Heart left ventricle (tissue), 16 donors: ENCODE measurements at regions of chr20 and their contacts with region 1.

Region 1: DNA sequence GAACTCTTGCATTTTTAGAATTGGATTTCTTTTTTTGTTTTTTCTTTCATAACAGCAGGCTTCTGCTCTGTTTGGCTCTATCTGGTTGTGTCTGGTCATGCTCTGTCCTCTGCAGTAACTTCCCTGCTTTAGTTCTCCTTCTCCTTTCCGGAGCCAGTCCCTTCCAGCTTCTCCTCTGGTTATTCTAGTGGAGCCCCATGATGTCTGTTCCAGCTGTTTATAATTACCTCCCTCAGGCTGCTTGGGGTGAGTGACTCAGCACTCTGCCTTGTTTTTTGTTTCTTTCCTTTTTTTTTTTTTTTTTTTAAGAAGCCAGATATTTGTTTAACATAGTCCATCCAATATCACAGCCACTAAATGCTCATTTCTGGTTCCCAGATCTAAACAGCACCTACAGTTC is 409.6 kb downstream of the MAFB start:
- DNase-seq: peak in 4 of 5 donors; percentile 39 to 60 (median 44)
- ATAC-seq: peak; percentile 88 to 95 (median 92)
- H3K4me3 ChIP-seq: no peak overlapping the region
- H3K27ac ChIP-seq: peak overlapping the region in 10 of 12 donors; percentile 8 to 91 (median 40)
- H3K4me1 ChIP-seq: peaks cover 0 to 37% (median 5%) of the 10 kb centered on the region in 12 donors
- H3K27me3 ChIP-seq: no peaks in the 10 kb centered on the region
- CTCF ChIP-seq: no peak
- POLR2A ChIP-seq: no peak

Region 2: DNA sequence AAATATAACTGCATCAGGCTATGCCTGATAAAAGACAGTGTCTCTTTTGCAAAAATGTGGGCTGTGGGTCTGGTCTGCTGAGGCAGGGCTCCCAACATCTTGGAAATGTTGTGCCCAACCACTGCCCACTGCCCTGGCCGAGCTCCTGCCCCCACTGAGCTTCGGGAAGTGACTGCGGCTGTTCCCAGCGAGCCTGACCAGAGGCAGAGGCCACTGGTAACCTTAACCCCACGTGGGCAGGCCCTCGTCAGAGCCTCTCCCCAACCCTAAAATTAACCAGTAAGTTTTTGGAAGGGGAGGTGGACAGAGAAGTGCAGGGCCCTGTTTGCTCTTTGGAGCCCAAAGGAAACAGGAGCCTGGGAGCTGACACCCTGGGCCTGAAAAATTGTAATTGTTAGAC is 183.8 kb after region 1 on chr20:
- intact Hi-C with region 1: loop called in 1 of 10 experiments (anchors 10 kb)
- DNase-seq: peak in 1 of 5 donors; percentile 34
- ATAC-seq: peak in 2 of 4 donors; percentile 46 to 49
- H3K4me3 ChIP-seq: no peak overlapping the region
- H3K27ac ChIP-seq: peak overlapping the region in 1 of 12 donors; percentile 84
- H3K4me1 ChIP-seq: peaks cover 0 to 40% (median 0%) of the 10 kb centered on the region in 12 donors
- H3K27me3 ChIP-seq: no peaks in the 10 kb centered on the region
- CTCF ChIP-seq: no peak
- POLR2A ChIP-seq: no peak